ENCODE measurements at regions of chr12 and their contacts with region 1.

Region 1: GRCh38 chr12:122190842-122191668 is 8.1 kb downstream of the LRRC43 start:
- DNase-seq: peak; percentile 81 to 88
- H3K4me3 ChIP-seq: no peak overlapping the region
- H3K4me3 Mint-ChIP-seq: no peak overlapping the region
- H3K27ac Mint-ChIP-seq: no peak overlapping the region
- H3K4me1 ChIP-seq: no peaks in the 10 kb centered on the region
- H3K4me1 Mint-ChIP-seq: no peaks in the 10 kb centered on the region
- H3K27me3 ChIP-seq: no peaks in the 10 kb centered on the region
- H3K27me3 Mint-ChIP-seq: no peaks in the 10 kb centered on the region
- CTCF ChIP-seq: peak; percentile 88 to 91

Region 2: DNA sequence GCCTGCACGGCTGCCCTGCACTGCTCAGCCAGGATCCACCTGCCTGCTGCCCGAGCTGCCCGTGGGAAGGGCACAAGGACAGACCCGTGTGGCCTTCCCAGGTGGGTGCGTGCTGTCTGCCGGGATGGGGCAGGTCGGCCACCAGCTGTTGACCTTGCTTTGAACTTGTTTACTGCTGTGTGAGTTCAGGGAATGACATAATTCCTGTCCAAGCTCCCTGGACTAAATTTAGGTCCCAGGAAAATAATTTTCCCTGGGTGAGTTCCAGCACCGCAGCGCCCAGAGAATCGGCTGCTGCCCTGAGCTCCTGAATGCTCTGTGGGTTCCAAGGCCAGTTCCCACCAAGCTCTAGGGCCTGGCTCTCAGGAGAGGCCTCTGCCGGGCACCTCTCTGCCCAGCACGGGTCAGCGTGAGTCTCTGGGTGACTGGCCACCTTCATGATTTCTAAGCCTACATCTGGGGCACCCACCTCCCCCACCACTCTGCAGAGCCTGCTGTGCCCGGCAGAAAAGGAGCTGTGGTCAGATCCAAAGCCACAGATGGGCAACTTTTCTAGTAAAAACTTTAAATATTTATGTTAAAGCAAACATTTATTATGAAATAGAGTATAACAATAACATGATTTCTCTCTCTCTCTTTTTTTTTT is 139.7 kb before region 1 on chr12:
- CTCF ChIA-PET with region 1: interaction called, 5 read pairs
- POLR2A ChIA-PET with region 1: interaction called, 10 read pairs
- intact Hi-C with region 1: loop called (anchors 2 kb)
- DNase-seq: no peak
- H3K4me3 ChIP-seq: no peak overlapping the region
- H3K4me3 Mint-ChIP-seq: no peak overlapping the region
- H3K27ac Mint-ChIP-seq: no peak overlapping the region
- H3K4me1 ChIP-seq: peaks cover 12% of the 10 kb centered on the region
- H3K4me1 Mint-ChIP-seq: peaks cover 6% of the 10 kb centered on the region
- H3K27me3 ChIP-seq: no peaks in the 10 kb centered on the region
- H3K27me3 Mint-ChIP-seq: no peaks in the 10 kb centered on the region
- CTCF ChIP-seq: no peak

Region 3: GRCh38 chr12:122159882-122160281 is 31.2 kb before region 1 on chr12:
- CTCF ChIA-PET with region 1: interaction called, 8 read pairs
- POLR2A ChIA-PET with region 1: interaction called, 8 read pairs
- intact Hi-C with region 1: loop called (anchors 1 kb)
- DNase-seq: peak in 1 of 2 experiments; percentile 25
- H3K4me3 ChIP-seq: no peak overlapping the region
- H3K4me3 Mint-ChIP-seq: no peak overlapping the region
- H3K27ac Mint-ChIP-seq: no peak overlapping the region
- H3K4me1 ChIP-seq: no peaks in the 10 kb centered on the region
- H3K4me1 Mint-ChIP-seq: no peaks in the 10 kb centered on the region
- H3K27me3 ChIP-seq: no peaks in the 10 kb centered on the region
- H3K27me3 Mint-ChIP-seq: no peaks in the 10 kb centered on the region
- CTCF ChIP-seq: peak; percentile 25 to 31

Region 4: GRCh38 chr12:122250047-122250446 is 59.0 kb after region 1 on chr12:
- CTCF ChIA-PET with region 1: no interaction called
- POLR2A ChIA-PET with region 1: no interaction called
- intact Hi-C with region 1: no loop called
- DNase-seq: no peak
- H3K4me3 ChIP-seq: no peak overlapping the region
- H3K4me3 Mint-ChIP-seq: no peak overlapping the region
- H3K27ac Mint-ChIP-seq: no peak overlapping the region
- H3K4me1 ChIP-seq: no peaks in the 10 kb centered on the region
- H3K4me1 Mint-ChIP-seq: no peaks in the 10 kb centered on the region
- H3K27me3 ChIP-seq: no peaks in the 10 kb centered on the region
- H3K27me3 Mint-ChIP-seq: no peaks in the 10 kb centered on the region
- CTCF ChIP-seq: no peak